AG04449 (cell line): ENCODE measurements at regions of chr7 and their contacts with region 1.

Region 1: DNA sequence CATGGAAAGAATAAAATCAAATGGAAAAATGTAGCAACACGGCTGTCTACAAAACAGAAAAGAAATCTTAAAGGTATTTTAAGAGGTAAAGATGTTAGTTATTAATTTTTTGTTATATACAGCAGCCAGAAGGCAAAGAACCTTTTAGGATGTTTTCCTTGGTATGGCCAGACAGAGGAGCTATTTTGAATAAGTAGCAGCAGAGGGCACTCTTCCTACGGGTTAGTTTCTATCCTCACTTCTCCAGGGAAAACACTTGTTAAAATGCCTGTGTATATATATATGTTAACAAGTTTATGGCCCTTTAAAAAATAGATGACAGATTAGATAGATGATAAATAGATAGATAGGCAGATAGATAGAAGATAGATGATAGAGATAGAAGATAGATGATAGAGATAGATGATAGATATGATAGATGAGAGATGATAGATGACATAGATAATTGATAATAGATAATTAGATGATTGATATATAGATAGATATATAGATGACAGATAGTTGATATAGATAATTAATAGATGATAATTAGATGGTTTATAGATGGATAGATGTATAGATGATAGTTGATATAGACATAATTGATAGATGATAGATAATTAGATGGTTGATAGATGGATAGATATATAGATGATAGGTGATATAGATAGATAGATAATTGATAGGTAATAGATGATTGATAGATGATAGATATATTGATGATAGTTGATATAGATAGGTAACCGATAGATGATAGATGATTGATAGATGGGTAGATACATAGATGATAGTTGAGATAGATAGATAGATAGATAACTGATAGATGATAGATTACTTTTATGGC is 57.8 kb upstream of the WIPF3 start:
- DNase-seq: peak; percentile 10
- H3K4me3 ChIP-seq: no peak overlapping the region
- CTCF ChIP-seq: peak; percentile 40

Region 2: GRCh38 chr7:29764227-29764626 is 15.7 kb after region 1 on chr7:
- CTCF ChIA-PET with region 1: interaction called, 10 read pairs
- POLR2A ChIA-PET with region 1: no interaction called
- DNase-seq: no peak
- H3K4me3 ChIP-seq: no peak overlapping the region
- CTCF ChIP-seq: no peak